ENCODE measurements at regions of chr13 and their contacts with region 1.

Region 1: DNA sequence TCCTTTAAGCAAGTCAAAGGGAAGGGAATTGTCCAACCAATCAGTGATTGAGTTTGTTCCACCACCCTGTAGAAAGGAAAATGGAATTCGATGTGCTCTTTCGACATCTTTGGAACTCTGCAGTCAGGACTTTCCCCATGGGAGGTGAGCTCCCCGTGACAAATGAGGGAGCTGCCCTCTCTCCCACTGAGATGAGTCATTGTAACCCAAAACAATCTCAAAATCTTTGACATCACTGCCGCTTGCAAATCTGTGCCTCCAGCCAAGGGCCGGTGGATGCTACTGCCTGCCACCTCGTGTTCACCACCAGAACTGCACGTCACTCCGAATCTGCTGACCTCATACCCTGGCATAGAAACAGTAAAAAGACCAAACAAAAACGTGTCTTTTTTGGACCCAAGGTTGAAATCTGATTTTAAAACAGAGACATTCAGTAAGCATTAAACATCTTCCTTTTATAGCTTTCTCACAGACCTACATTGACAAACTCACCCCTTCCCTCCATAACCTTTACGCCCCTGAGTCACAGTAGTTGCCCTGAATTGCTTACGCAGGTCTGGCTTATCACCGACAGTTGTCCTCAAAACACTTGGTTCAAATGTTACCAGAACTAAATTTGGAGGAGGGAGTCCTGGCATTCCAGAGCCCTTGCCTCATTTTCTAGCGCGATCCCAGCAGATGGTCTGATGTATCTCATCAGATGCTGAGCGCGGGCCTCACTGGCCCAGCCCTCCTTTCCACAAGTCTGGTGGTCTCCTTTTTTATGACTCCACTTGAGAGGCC is 105.2 kb downstream of the COL4A2 start:
- H3K4me3 Mint-ChIP-seq: no peak overlapping the region
- H3K27ac Mint-ChIP-seq: no peak overlapping the region
- H3K4me1 Mint-ChIP-seq: peaks cover 15% of the 10 kb centered on the region
- H3K27me3 Mint-ChIP-seq: peaks cover 65% of the 10 kb centered on the region

Region 2: DNA sequence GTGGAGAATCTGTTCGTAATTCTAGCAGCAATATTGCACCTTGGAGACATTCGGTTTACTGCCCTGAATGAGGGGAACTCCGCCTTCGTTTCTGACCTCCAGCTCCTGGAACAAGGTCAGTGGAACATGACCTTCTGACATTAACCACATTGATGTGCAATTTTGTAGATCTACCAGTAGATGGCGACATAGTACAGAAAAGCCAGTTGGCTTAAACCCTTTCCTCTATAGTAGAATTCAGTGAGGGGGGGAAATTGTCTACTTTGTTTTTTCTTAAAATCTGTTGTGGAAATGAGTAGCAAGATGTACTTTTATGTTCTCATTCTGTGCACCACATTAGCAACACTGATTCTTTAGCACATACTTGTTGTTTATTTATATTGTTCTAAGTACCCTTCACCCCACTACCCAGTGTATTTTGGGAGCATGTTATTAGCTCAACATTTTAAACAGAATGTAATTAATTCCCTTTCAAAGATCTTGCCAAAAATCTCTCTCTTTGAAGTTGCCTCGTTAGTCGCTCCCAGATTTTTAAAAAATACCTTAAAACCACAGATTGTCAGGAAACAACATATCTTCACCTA is 1450.7 kb before region 1 on chr13:
- intact Hi-C with region 1: loop called (anchors 2 kb)
- H3K4me3 Mint-ChIP-seq: no peak overlapping the region
- H3K27ac Mint-ChIP-seq: no peak overlapping the region
- H3K4me1 Mint-ChIP-seq: peaks cover 7% of the 10 kb centered on the region
- H3K27me3 Mint-ChIP-seq: no peaks in the 10 kb centered on the region

Region 3: DNA sequence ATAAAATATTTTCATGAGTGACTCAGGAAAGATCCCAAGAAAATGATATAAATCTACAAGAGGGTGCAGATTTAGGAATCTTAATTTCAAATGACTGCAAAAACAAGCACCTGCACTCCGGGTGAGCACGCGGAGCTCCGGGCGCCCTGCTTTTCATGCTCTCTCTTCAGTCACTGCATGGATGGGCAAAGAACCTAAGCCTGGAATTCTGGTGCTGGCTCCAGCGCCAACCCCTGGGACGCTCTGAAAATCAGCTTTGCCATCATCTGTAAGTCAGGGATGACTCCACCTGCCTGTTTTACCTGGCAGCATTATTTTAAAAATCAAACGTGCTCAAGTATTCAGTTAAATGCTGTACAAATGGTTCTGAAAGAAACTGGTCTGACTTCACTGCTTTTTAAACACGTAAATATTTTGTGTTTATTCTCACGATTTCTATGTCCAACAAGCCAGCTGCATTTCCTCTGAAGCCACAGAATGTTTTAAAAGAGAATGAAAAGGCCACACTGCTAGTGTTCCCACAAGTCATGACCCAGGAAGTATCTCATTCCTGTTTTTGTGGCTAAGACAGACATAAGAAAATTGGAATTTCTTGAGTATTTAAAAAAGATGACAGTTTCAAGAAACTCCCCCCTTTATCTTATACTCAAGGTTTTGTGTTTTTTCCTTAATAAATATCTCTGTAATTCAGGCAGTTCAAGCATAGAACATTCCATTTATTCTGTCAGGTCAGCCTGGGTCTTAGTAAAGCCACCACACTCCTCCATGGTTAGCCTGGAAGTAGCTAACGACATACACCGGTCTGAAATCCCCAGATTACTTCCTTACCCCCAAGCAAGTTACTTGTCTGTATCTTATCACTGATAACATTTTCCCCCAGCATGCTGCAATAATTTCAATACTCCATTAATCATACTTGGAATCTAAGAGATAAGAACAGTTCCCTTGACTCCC is 186.4 kb before region 1 on chr13:
- intact Hi-C with region 1: loop called (anchors 1 kb)
- H3K4me3 Mint-ChIP-seq: no peak overlapping the region
- H3K27ac Mint-ChIP-seq: no peak overlapping the region
- H3K4me1 Mint-ChIP-seq: no peaks in the 10 kb centered on the region
- H3K27me3 Mint-ChIP-seq: peaks cover 15% of the 10 kb centered on the region

Measured in dendritic cell treated with granulocyte-macrophage colony-stimulating factor and Interleukin-4, amounts not matched to agents 40 ng/mL and 50 ng/mL, for 4 days (primary cell).